ENCODE measurements at regions of chr11 and their contacts with region 1.

Region 1: GRCh38 chr11:45655347-45655756 is 10.1 kb downstream of the CHST1 start:
- DNase-seq: peak; percentile 32
- H3K4me3 Mint-ChIP-seq: no peak overlapping the region
- H3K27ac Mint-ChIP-seq: no peak overlapping the region
- H3K4me1 Mint-ChIP-seq: peaks cover 8% of the 10 kb centered on the region
- H3K27me3 Mint-ChIP-seq: peaks cover 14% of the 10 kb centered on the region

Region 2: GRCh38 chr11:45339729-45340519 is 315.4 kb before region 1 on chr11:
- intact Hi-C with region 1: loop called (anchors 1 kb)
- DNase-seq: peak; percentile 82
- H3K4me3 Mint-ChIP-seq: peak overlapping the region; percentile 30
- H3K27ac Mint-ChIP-seq: no peak overlapping the region
- H3K4me1 Mint-ChIP-seq: peaks cover 19% of the 10 kb centered on the region
- H3K27me3 Mint-ChIP-seq: peaks cover 23% of the 10 kb centered on the region

Region 3: DNA sequence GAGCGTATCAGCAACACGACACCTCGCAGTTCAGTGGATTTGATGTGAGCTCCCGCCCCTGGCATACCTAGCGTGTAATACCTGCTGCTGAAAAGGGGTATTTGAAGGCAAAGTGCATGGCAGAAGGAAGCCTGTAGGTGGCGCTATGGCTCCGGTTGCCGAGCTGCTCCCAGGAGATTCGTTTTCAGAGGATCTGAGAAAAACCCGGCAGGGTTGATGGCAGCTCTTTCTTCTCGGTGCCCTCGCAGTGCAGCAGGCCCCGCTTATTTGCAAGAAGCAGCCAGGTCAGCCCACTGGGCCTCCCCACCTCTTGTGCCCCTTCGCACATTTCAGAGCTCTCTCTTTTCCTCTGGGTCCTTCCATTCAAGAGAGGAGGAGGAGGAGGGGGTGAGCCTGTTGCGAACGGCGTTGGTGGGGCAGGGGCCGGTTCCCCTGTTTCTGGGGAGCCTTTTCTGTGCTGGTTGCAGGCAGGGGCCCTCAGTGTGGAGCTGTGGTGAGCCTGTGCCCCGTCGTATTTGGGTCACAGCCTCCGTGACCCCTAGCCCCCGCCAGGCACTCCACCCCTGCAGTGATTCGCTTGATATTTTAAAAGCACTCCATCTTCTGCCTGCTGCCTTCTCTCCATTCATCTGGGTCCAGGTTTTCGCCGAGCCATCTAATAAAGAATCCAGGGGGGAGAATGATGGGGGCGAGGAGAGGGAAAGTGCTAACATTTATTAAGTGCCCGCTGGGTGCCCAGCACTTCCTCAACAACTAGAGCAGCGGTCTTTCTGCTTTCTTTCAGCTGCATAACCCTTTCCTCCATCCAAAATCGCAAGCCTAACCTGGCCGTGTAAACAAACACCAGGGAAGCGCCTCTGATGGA is 283.9 kb before region 1 on chr11:
- intact Hi-C with region 1: loop called (anchors 1 kb)
- DNase-seq: peak; percentile 36
- H3K4me3 Mint-ChIP-seq: no peak overlapping the region
- H3K27ac Mint-ChIP-seq: no peak overlapping the region
- H3K4me1 Mint-ChIP-seq: peaks cover 5% of the 10 kb centered on the region
- H3K27me3 Mint-ChIP-seq: peaks cover 9% of the 10 kb centered on the region

Region 4: DNA sequence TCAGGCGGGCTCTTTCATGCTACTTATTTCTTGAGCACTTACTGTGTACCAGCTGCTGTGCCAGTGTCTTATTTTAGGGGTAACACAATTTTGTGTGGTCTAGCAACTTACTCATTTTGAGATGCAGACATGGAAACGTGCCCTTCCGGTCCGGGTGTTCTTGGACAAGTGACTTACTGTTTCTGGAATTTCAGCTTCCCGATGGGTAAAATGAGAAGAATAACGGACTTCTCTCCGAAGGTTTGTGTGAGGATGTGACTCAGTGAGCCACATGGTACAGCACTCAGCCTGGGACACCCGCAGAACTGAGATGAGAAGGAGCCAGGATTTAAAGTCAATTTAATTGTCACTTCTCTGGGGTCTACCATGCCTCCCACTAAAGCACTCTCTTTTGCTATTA is 254.8 kb before region 1 on chr11:
- intact Hi-C with region 1: no loop called
- DNase-seq: no peak
- H3K4me3 Mint-ChIP-seq: no peak overlapping the region
- H3K27ac Mint-ChIP-seq: no peak overlapping the region
- H3K4me1 Mint-ChIP-seq: no peaks in the 10 kb centered on the region
- H3K27me3 Mint-ChIP-seq: peaks cover 13% of the 10 kb centered on the region

Region 5: DNA sequence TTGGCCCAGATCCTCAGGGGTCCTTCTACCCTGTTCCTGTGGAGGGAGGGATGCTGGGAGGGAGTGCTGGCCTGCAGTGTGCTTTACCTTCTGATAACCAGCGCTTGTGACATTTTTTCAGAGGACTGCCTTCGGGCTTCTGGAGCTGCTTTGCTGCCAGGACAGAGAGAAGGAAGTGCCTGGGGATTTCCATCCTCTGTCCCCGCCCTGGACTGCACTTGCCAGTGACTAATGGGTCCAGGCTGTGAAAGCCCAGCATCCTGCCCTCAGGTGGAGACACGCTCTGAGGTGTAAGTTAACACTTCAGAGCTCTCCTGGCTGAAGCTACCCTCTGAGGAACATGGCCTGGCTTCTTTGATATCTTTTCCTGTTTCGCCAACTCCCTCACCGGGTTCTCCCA is 210.6 kb before region 1 on chr11:
- intact Hi-C with region 1: no loop called
- DNase-seq: no peak
- H3K4me3 Mint-ChIP-seq: no peak overlapping the region
- H3K27ac Mint-ChIP-seq: no peak overlapping the region
- H3K4me1 Mint-ChIP-seq: no peaks in the 10 kb centered on the region
- H3K27me3 Mint-ChIP-seq: peaks cover 2% of the 10 kb centered on the region

Region 6: DNA sequence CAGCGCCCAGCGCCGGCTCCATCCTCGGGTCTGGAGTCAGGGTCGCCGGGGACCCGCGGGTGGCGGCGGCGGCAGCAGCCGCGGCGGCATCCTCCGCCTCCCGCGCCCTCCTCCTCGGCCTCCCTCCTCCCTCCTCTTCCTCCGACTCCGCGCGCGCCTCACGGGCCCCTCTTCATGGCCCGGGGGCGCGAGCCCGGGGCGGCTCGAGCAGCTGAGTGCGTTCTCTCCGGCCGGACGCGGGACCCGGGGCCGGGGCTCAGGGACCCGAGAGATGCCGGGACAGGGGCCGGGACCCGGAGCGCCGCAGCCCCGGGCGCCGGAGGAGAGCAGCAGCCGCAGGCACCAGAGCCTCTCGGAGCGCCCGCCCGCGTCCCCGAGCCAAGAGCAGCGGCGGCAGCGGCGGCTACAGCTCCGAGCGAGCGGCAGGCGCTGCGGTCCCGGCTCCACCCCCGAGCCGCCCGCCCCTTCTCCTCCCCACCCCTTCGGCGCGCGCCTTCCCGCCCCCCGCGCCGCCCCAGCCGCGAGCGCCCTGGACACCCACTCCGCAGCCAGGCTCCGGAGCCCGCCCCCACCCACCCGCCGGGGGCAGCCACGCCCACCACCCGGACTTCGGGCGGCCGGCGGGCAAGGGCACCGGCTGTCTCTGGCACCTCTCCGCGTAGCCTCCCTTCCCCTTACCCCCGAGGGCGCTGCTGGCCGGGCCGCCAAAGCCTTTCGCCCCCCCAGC is 10.0 kb after region 1 on chr11 and contains the start of gene CHST1:
- intact Hi-C with region 1: no loop called
- DNase-seq: no peak
- H3K4me3 Mint-ChIP-seq: peak within 1 kb of the TSS; percentile 51
- H3K27ac Mint-ChIP-seq: no peak within 1 kb of the TSS
- H3K4me1 Mint-ChIP-seq: no peaks in the 10 kb centered on the region
- H3K27me3 Mint-ChIP-seq: peaks cover 64% of the 10 kb centered on the region
- total RNA-seq, gene CHST1: 0.17 and 0.23 TPM in 2 replicates